ENCODE measurements at regions of chr1 and their contacts with region 1.

Region 1: GRCh38 chr1:181105134-181106021 is 16.9 kb downstream of the IER5 start:
- DNase-seq: peak; percentile 96
- H3K27ac ChIP-seq: peak overlapping the region; percentile 91
- CTCF ChIP-seq: no peak

Region 2: GRCh38 chr1:181117638-181118449 is 12.5 kb after region 1 on chr1:
- CTCF ChIA-PET with region 1: interaction called, 9 read pairs
- POLR2A ChIA-PET with region 1: interaction called, 14 read pairs
- DNase-seq: peak; percentile 94
- H3K27ac ChIP-seq: peak overlapping the region; percentile 51
- CTCF ChIP-seq: no peak

Measured in RWPE1 (cell line).